HAP-1 (cell line): ENCODE measurements at regions of chr7 and their contacts with region 1.

Region 1: DNA sequence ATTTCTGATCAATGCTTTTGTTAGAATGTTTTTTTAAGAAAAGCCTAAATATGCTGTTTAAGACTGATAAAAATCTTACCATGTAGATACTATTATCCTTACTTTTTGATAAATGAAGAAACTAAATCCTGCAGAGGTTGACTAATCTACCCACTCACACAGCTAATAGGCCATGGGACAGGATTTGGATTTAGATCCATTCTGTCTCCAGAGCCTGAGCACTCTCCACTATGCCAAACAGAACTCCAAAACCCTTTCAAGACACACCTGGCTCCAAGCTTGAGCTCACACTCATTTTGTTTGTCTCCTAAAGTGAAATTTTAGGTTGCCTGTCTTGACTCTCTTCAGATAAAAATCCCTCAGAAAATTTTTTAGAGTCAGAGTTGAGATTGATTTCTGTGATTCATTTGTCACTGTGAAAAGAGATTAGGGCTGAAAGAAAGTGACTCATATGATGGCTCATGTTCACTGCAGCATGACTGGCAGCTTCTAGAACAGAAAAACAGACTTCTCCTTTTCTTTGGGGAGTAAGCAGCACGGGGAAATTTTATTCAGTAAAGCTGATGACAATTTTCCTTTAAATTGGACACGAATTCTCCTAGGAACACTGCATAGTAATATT is 132.3 kb upstream of the POT1 start:
- DNase-seq: peak; percentile 13 to 73
- H3K4me3 ChIP-seq: no peak overlapping the region
- H3K4me1 ChIP-seq: peaks cover 29% of the 10 kb centered on the region
- H3K27me3 ChIP-seq: no peaks in the 10 kb centered on the region

Region 2: GRCh38 chr7:124652237-124652636 is 409.6 kb before region 1 on chr7:
- in situ Hi-C with region 1: no loop called
- DNase-seq: no peak
- H3K4me3 ChIP-seq: no peak overlapping the region
- H3K4me1 ChIP-seq: no peaks in the 10 kb centered on the region
- H3K27me3 ChIP-seq: no peaks in the 10 kb centered on the region

Region 3: DNA sequence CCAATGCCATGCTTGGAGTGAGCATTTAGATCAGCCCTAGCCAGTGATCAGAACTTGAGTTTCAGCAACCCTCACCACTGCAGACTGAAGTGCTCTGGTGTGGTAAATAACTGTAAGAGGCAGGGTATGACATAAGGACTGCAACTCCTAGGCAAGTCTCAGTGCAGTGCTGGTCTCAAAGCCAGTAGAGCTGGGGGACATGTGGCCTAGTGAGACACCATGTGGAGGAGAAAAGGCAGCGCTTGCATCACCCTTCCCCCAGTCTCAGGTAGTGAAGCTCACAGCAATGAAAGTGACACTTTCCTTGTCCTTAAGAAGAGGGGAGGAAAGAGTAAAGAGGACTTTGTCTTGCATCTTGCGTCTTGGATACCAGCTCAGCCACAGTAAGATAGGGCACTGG is 254.6 kb after region 1 on chr7:
- in situ Hi-C with region 1: loop called (anchors 10 kb)
- DNase-seq: peak; percentile 80 to 82
- H3K4me3 ChIP-seq: no peak overlapping the region
- H3K4me1 ChIP-seq: peaks cover 3% of the 10 kb centered on the region
- H3K27me3 ChIP-seq: no peaks in the 10 kb centered on the region

Region 4: DNA sequence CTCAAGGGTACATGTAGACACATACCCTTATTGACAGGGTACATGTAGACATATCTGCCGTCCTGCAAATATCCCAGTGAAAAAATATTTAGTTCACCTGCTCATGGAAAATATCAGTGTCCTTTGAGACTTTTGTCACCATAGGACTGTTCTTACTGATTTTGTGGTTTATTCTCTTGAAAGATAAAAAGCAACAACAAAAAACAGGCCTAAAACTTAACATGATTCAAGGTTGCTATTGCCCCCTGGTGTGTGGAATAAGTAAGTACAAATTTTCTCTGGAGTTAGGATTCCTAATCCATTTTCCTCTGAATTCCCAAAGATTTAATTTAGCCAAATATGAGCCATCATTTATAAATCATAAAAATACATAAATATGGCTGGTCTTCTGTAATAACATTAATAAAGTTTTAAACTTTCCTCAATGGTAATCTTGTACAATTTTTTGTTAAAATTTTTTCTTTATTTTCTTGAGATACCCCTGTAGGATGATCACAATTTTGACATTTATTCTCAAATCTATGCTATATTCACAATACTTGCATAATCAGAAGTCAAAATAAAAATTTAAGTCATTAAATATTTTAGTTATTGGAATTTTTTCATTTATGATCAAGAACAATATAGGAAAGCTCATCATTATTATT is 609.2 kb after region 1 on chr7:
- in situ Hi-C with region 1: loop called (anchors 25 kb)
- DNase-seq: peak in 1 of 2 experiments; percentile 65
- H3K4me3 ChIP-seq: no peak overlapping the region
- H3K4me1 ChIP-seq: peaks cover 8% of the 10 kb centered on the region
- H3K27me3 ChIP-seq: no peaks in the 10 kb centered on the region